ENCODE measurements at regions of chr4 and their contacts with region 1.

Region 1: DNA sequence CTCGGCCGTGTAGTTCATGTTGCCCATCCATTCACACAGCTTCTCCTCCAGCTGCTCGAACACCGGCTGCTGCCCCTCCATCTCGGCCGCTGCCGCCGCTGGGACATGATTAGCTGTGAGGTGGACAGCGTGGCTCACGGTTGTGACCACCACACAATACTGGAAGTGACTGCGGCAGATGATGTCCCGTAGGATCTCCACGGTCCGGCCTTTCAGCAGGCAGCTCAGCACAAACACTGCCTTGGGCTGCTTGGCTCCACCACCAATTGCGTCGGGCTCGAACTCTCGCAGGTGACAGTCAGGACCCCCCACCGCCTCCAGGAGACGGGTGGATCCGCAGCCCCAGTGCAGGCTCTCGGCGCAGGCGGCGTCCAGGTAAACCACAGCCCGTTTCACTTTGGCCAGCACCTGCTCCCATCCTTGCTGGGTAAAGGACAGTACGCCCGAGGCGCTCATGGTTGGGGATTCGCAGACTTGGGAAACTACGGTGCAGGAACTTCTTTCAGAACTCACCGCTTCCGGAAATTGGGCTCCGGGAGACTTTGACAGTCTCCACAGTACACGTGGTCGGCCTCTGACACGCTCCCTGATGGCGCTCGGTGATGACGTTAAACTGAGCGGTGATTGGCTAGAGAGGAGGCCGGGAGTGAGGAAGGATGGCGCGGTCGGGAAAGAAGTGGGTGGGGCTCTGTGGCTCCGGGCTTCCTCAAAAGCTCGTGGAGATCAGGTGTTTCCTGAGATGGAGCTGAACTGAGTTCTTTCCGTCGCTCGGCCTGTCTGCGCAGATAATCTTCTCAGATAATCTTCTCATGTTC is at the start of gene SCFD2:
- DNase-seq: peak; percentile 93 to 98 (median 95)
- H3K4me3 ChIP-seq: peak within 1 kb of the TSS; percentile 77 to 97
- H3K4me3 Mint-ChIP-seq: peak within 1 kb of the TSS; percentile 94 to 98 (median 96)
- H3K27ac ChIP-seq: peak within 1 kb of the TSS; percentile 74
- H3K27ac Mint-ChIP-seq: peak within 1 kb of the TSS; percentile 95 to 98 (median 97)
- H3K4me1 ChIP-seq: peaks cover 46% of the 10 kb centered on the region
- H3K4me1 Mint-ChIP-seq: peaks cover 38 to 56% (median 47%) of the 10 kb centered on the region in 4 donors
- H3K27me3 ChIP-seq: no peaks in the 10 kb centered on the region
- H3K27me3 Mint-ChIP-seq: peaks cover 3 to 5% of the 10 kb centered on the region in 2 donors
- total RNA-seq, gene SCFD2: 12.4 to 13.1 TPM

Region 2: DNA sequence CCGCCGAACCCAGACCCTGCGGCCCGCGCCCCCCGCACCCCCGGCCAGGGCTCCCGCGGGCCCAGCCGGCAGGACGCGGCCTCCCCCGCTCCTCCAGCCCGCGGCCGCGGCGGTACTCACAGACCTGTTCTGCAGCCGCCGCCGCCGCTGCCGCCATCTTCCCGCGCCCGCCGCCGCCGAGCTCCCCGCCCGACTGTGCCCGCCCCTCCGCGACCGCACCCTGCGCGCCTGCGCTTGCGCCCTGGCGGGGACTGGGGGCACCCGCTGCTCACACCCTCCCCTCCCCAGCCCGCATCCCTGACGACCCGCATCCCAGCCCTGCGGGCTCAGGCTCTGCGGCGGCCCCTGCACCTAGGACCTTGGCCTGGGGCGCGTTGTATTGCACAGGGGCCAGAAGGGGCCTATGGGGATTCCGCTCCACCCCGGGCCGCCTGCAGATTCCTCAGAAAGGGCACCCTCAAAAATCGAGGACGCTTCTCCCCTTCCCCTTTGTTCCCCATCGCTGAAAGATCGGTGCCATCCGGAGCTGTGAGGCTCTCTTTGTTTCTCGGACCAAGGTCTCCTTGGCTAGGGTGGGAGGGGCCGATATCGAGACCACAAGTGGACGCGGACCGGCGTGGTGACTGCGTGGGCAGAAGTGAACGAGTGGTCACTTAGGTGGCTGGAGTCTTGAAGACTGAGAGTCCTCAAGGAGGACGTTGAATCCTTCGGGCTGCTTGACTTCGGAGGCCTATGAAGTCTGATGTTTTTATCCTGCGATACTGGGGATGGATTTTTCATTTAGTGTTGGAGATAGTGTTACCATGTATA is 1327.4 kb before region 1 on chr4 and contains the start of gene SGCB:
- CTCF ChIA-PET with region 1: no interaction called
- POLR2A ChIA-PET with region 1: no interaction called
- intact Hi-C with region 1: loop called (anchors 10 kb)
- DNase-seq: peak; percentile 64 to 75 (median 68)
- H3K4me3 ChIP-seq: peak within 1 kb of the TSS; percentile 5 to 57
- H3K4me3 Mint-ChIP-seq: peak within 1 kb of the TSS; percentile 84 to 91 (median 88)
- H3K27ac ChIP-seq: no peak within 1 kb of the TSS
- H3K27ac Mint-ChIP-seq: peak within 1 kb of the TSS in 5 of 7 donors; percentile 71 to 82 (median 75)
- H3K4me1 ChIP-seq: peaks cover 10% of the 10 kb centered on the region
- H3K4me1 Mint-ChIP-seq: peaks cover 21 to 36% (median 28%) of the 10 kb centered on the region in 4 donors
- H3K27me3 ChIP-seq: no peaks in the 10 kb centered on the region
- H3K27me3 Mint-ChIP-seq: peaks cover 2 to 10% of the 10 kb centered on the region in 2 donors
- total RNA-seq, gene SGCB: 7.4 to 7.5 TPM

Region 3: GRCh38 chr4:53377319-53378170 is 11.9 kb after region 1 on chr4 and contains the start of gene FIP1L1:
- CTCF ChIA-PET with region 1: interaction called, 7 read pairs
- POLR2A ChIA-PET with region 1: interaction called, 49 read pairs
- intact Hi-C with region 1: loop called (anchors 1 kb)
- DNase-seq: peak; percentile 93 to 97 (median 95)
- H3K4me3 ChIP-seq: peak within 1 kb of the TSS; percentile 71 to 89
- H3K4me3 Mint-ChIP-seq: peak within 1 kb of the TSS; percentile 98 to 100 (median 99)
- H3K27ac ChIP-seq: peak within 1 kb of the TSS; percentile 92
- H3K27ac Mint-ChIP-seq: peak within 1 kb of the TSS; percentile 97 to 100 (median 99)
- H3K4me1 ChIP-seq: peaks cover 37% of the 10 kb centered on the region
- H3K4me1 Mint-ChIP-seq: peaks cover 19 to 53% (median 34%) of the 10 kb centered on the region in 4 donors
- H3K27me3 ChIP-seq: no peaks in the 10 kb centered on the region
- H3K27me3 Mint-ChIP-seq: no peaks in the 10 kb centered on the region
- total RNA-seq, gene FIP1L1: 73.0 to 90.7 TPM

Measured in CD4-positive, alpha-beta memory T cell (primary cell).